PC-9 (cell line): ENCODE measurements at regions of chr5 and their contacts with region 1.

Region 1: GRCh38 chr5:43227655-43228054 is 35.6 kb downstream of the NIM1K start:
- DNase-seq: peak; percentile 19 to 72
- H3K4me3 ChIP-seq: no peak overlapping the region
- H3K27ac ChIP-seq: no peak overlapping the region
- H3K4me1 ChIP-seq: no peaks in the 10 kb centered on the region
- H3K27me3 ChIP-seq: no peaks in the 10 kb centered on the region
- CTCF ChIP-seq: peak; percentile 93

Region 2: DNA sequence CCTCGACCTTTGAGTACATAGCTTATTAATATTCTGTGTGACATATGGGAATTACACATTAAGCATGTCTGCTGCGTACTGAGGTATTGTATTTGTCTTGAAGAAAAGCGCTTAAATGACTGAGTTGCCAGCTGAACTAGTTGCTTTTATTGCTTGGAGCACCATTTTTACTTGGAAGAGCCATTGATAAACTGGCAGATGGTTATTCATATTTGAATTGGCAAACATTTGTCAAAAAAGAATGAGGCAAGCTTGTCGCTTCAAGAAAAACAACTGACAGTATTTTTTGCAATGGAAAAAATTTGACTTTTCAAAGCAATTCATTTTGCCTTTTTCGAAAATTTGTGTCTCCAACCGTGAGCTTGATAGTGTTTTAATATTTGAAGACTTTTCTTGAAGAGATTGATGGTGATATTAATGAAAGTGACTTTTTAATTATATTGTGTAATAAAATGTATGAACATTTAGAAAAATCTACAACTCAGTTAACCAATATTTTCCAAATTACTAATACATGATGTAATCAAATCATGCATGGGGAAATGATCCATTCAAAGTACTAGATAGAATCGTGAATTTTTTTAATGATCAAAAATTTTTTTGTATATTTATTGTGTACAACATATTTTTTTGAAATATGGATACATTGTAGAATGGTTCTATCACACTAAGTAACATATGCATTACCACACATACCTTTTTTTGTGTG is 526.1 kb before region 1 on chr5:
- CTCF ChIA-PET with region 1: no interaction called
- POLR2A ChIA-PET with region 1: no interaction called
- intact Hi-C with region 1: no loop called
- DNase-seq: no peak
- H3K4me3 ChIP-seq: no peak overlapping the region
- H3K27ac ChIP-seq: no peak overlapping the region
- H3K4me1 ChIP-seq: no peaks in the 10 kb centered on the region
- H3K27me3 ChIP-seq: no peaks in the 10 kb centered on the region
- CTCF ChIP-seq: no peak

Region 3: GRCh38 chr5:43137326-43137725 is 90.3 kb before region 1 on chr5:
- CTCF ChIA-PET with region 1: no interaction called
- POLR2A ChIA-PET with region 1: no interaction called
- intact Hi-C with region 1: no loop called
- DNase-seq: no peak
- H3K4me3 ChIP-seq: no peak overlapping the region
- H3K27ac ChIP-seq: no peak overlapping the region
- H3K4me1 ChIP-seq: no peaks in the 10 kb centered on the region
- H3K27me3 ChIP-seq: no peaks in the 10 kb centered on the region
- CTCF ChIP-seq: no peak

Region 4: DNA sequence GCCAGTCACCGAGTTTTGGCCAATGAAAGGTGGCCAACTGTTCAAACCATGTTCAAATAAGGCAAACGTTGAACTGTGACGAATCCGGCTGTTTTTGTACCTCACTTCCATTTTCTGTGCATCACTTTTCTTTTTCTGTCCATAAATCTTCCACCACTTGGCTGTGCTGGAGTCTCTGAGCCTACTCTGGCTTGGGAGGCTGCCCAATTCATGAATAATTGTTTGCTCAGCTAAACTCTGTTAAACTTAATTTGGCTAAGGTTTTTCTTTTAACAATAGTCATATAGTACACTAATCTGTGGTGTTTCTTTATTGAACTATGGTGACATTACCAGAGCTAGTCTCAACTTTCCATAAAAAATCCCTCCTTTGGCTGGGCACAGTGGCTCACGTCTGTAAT is 24.3 kb before region 1 on chr5:
- CTCF ChIA-PET with region 1: interaction called, 10 read pairs
- POLR2A ChIA-PET with region 1: no interaction called
- intact Hi-C with region 1: no loop called
- DNase-seq: no peak
- H3K4me3 ChIP-seq: no peak overlapping the region
- H3K27ac ChIP-seq: no peak overlapping the region
- H3K4me1 ChIP-seq: peaks cover 10% of the 10 kb centered on the region
- H3K27me3 ChIP-seq: no peaks in the 10 kb centered on the region
- CTCF ChIP-seq: no peak

Region 5: GRCh38 chr5:43305948-43306565 is 78.4 kb after region 1 on chr5:
- CTCF ChIA-PET with region 1: no interaction called
- POLR2A ChIA-PET with region 1: no interaction called
- intact Hi-C with region 1: loop called (anchors 2 kb)
- DNase-seq: peak in 1 of 2 experiments; percentile 77
- H3K4me3 ChIP-seq: no peak overlapping the region
- H3K27ac ChIP-seq: no peak overlapping the region
- H3K4me1 ChIP-seq: peaks cover 34% of the 10 kb centered on the region
- H3K27me3 ChIP-seq: no peaks in the 10 kb centered on the region
- CTCF ChIP-seq: peak; percentile 95

Region 6: GRCh38 chr5:44233691-44234090 is 1006.0 kb after region 1 on chr5:
- CTCF ChIA-PET with region 1: no interaction called
- POLR2A ChIA-PET with region 1: no interaction called
- intact Hi-C with region 1: no loop called
- DNase-seq: no peak
- H3K4me3 ChIP-seq: no peak overlapping the region
- H3K27ac ChIP-seq: no peak overlapping the region
- H3K4me1 ChIP-seq: no peaks in the 10 kb centered on the region
- H3K27me3 ChIP-seq: no peaks in the 10 kb centered on the region
- CTCF ChIP-seq: no peak